ENCODE measurements at regions of chr2 and their contacts with region 1.

Region 1: GRCh38 chr2:37156857-37157714 is at the start of gene EIF2AK2:
- DNase-seq: peak; percentile 67
- H3K4me3 ChIP-seq: peak within 1 kb of the TSS; percentile 59 to 76
- H3K27ac ChIP-seq: peak within 1 kb of the TSS; percentile 85 to 86
- H3K4me1 ChIP-seq: no peaks in the 10 kb centered on the region
- H3K27me3 ChIP-seq: no peaks in the 10 kb centered on the region
- CTCF ChIP-seq: no peak
- POLR2A ChIP-seq: peak; percentile 25
- total RNA-seq, gene EIF2AK2: 20.8 to 32.1 TPM

Region 2: DNA sequence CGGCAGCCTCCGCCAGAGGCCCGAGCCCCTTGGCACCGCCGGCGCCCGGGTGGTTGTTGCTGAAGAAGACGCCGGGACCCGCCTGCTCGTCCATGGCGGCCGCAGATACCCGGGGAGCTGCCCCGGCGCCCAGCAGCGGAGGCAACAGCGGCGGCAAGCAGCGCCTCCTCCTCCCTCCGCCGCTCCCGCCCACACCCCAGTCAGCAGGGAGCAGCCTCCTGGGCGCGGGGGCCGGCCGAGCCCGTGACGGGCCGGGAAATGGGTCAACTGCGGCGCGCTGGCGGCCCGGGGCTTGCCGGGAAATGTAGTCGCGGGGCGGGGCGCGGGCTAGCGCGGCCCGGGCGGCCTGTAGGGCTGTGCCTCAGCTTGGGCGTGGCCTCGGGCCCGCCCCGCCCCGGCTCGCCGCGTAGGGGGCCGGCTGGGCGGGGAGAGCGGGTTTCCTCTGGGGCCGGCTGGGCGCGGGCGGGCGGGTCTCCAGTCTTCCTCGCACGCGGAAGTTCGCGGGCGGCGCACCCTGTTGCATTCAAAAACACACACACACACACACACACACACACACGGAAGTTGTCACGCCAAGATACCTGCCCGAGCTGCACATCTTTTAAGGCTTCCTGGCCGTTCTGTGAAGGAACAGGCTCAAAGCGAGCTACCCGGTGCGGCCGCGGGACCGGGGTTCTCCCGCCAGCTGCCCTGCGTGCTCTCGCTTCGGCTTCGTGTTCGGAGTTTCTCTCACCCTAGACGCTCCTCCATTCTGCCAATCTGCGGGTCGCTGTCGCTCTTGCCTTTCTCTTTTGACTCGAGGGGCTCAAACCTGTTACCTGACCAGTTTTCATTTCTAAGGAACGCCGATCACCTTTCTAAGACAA is 190.5 kb before region 1 on chr2 and contains the start of gene STRN:
- intact Hi-C with region 1: no loop called
- DNase-seq: peak; percentile 95
- H3K4me3 ChIP-seq: peak within 1 kb of the TSS; percentile 68 to 98
- H3K27ac ChIP-seq: peak within 1 kb of the TSS; percentile 90 to 92
- H3K4me1 ChIP-seq: no peaks in the 10 kb centered on the region
- H3K27me3 ChIP-seq: no peaks in the 10 kb centered on the region
- CTCF ChIP-seq: peak in 1 of 4 experiments; percentile 14
- POLR2A ChIP-seq: peak; percentile 95
- total RNA-seq, gene STRN: 15.0 to 32.3 TPM

Region 3: DNA sequence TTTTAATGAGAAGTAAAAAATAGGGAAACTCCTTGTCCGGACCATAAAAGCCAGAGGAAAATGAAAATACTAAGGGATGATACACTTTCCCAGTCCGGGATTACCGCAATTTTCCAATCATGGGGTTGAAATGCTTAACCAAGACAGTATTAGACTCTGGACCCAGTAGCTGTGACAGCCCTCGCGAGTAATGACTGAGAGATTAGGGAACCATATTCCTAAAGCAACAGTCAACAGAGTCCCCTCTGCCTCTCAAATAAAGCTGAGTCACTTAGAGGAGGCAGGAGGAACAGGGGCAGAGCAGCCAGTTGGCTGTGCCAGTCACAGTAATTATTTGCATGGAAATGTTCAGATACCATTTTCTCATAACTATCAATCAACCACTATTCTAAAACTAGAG is 37.9 kb before region 1 on chr2:
- intact Hi-C with region 1: no loop called
- DNase-seq: no peak
- H3K4me3 ChIP-seq: no peak overlapping the region
- H3K27ac ChIP-seq: no peak overlapping the region
- H3K4me1 ChIP-seq: no peaks in the 10 kb centered on the region
- H3K27me3 ChIP-seq: no peaks in the 10 kb centered on the region
- CTCF ChIP-seq: no peak
- POLR2A ChIP-seq: no peak

Region 4: GRCh38 chr2:37231241-37232130 is 74.4 kb after region 1 on chr2 and contains the starts of genes CEBPZ and NDUFAF7:
- intact Hi-C with region 1: loop called (anchors 5 kb)
- DNase-seq: peak; percentile 91
- H3K4me3 ChIP-seq: peak within 1 kb of the TSS; percentile 66 to 67
- H3K27ac ChIP-seq: peak within 1 kb of the TSS; percentile 87 to 89
- H3K4me1 ChIP-seq: no peaks in the 10 kb centered on the region
- H3K27me3 ChIP-seq: no peaks in the 10 kb centered on the region
- CTCF ChIP-seq: peak in 1 of 4 experiments; percentile 20
- POLR2A ChIP-seq: peak; percentile 78
- total RNA-seq, gene CEBPZ: 27.5 to 35.4 TPM
- total RNA-seq, gene NDUFAF7: 12.8 to 25.7 TPM